Activated B cell treated with CpG ODN at 0.5 μM for 24 hours (primary cell): ENCODE measurements at regions of chr12 and their contacts with region 1.

Region 1: DNA sequence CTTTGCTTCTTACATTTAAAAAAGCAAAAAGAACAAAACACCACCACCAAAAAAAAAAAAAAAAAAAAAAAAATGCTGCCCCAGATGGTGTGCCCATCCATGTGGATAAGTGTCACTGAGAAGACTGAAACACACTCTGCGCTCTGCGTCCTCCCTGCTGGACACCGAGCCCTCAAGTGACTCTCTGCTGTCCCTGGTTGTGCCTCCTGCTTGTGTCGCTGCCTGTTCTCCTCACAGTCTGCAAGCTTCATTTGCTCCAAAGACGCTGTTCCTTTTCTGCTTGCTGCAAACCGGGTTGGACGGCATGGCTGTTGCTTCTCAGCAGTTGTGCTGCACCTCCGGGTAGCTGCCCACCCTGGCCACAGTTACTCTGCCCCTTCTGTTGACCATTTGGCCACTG is 276.2 kb upstream of the ATP2B1 start:
- DNase-seq: no peak
- ATAC-seq: no peak
- H3K4me3 Mint-ChIP-seq: no peak overlapping the region
- H3K27ac Mint-ChIP-seq: no peak overlapping the region
- H3K4me1 Mint-ChIP-seq: peaks cover 3% of the 10 kb centered on the region
- H3K27me3 Mint-ChIP-seq: no peaks in the 10 kb centered on the region
- CTCF ChIP-seq: no peak

Region 2: DNA sequence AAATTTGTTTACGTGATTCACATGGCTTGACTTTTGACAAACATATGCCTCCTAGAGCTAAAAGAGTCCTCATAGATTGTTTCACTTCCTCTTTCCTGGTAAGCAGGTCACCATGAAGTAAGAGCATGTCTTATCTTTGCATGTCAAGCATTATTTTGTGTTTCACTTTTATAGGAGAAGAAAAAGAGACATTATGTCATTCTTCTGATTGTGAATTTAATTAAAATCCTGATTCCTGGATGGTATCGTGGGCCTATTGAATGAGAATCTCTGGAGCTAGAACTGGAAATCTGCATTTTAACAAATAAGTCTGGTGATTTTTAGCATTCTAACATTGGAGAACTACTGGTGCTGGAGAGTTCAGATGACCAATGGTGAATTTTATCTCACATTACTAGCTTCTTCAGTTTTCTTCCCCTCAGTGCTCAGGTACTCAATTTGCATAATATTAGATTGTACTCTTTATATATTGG is 57.6 kb before region 1 on chr12:
- CTCF ChIA-PET with region 1: no interaction called
- POLR2A ChIA-PET with region 1: no interaction called
- intact Hi-C with region 1: no loop called
- DNase-seq: no peak
- ATAC-seq: peak; percentile 90
- H3K4me3 Mint-ChIP-seq: peak overlapping the region; percentile 89
- H3K27ac Mint-ChIP-seq: peak overlapping the region; percentile 98
- H3K4me1 Mint-ChIP-seq: peaks cover 69% of the 10 kb centered on the region
- H3K27me3 Mint-ChIP-seq: no peaks in the 10 kb centered on the region
- CTCF ChIP-seq: no peak

Region 3: GRCh38 chr12:89965993-89966392 is 18.9 kb before region 1 on chr12:
- CTCF ChIA-PET with region 1: no interaction called
- POLR2A ChIA-PET with region 1: no interaction called
- intact Hi-C with region 1: loop called (anchors 1 kb)
- DNase-seq: no peak
- ATAC-seq: no peak
- H3K4me3 Mint-ChIP-seq: no peak overlapping the region
- H3K27ac Mint-ChIP-seq: no peak overlapping the region
- H3K4me1 Mint-ChIP-seq: peaks cover 23% of the 10 kb centered on the region
- H3K27me3 Mint-ChIP-seq: no peaks in the 10 kb centered on the region
- CTCF ChIP-seq: no peak

Region 4: DNA sequence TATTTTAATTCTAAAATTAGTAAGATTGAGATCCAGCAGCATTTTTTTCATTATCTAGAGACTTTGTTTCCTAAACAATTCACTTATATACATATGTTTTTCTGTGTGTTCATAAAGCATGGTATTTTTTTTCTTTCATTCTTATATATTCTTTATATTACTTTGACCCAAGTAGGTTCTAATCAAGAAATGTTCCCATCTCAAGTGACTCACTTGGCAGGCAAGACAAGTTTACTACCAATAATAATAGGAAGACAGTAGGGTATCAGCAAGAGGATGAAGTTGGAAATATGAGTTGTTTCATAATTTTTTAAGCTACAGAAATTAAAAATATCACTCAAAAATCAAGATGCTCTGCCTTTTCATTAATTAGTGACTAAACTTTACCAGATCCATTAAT is 337.2 kb after region 1 on chr12:
- CTCF ChIA-PET with region 1: no interaction called
- POLR2A ChIA-PET with region 1: no interaction called
- intact Hi-C with region 1: no loop called
- DNase-seq: no peak
- ATAC-seq: no peak
- H3K4me3 Mint-ChIP-seq: no peak overlapping the region
- H3K27ac Mint-ChIP-seq: no peak overlapping the region
- H3K4me1 Mint-ChIP-seq: no peaks in the 10 kb centered on the region
- H3K27me3 Mint-ChIP-seq: peaks cover 4% of the 10 kb centered on the region
- CTCF ChIP-seq: no peak